Heart left ventricle (tissue), 16 donors: ENCODE measurements at regions of chr19 and their contacts with region 1.

Region 1: GRCh38 chr19:3094601-3095437 is 657 bp downstream of the GNA11 start:
- DNase-seq: peak in 1 of 5 donors; percentile 52
- ATAC-seq: no peak
- H3K4me3 ChIP-seq: peak overlapping the region; percentile 75 to 100 (median 98)
- H3K27ac ChIP-seq: peak overlapping the region; percentile 10 to 98 (median 94)
- H3K4me1 ChIP-seq: peaks cover 23 to 52% (median 45%) of the 10 kb centered on the region in 12 donors
- H3K27me3 ChIP-seq: peaks cover 0 to 16% (median 0%) of the 10 kb centered on the region in 9 donors
- CTCF ChIP-seq: no peak
- POLR2A ChIP-seq: no peak

Region 2: DNA sequence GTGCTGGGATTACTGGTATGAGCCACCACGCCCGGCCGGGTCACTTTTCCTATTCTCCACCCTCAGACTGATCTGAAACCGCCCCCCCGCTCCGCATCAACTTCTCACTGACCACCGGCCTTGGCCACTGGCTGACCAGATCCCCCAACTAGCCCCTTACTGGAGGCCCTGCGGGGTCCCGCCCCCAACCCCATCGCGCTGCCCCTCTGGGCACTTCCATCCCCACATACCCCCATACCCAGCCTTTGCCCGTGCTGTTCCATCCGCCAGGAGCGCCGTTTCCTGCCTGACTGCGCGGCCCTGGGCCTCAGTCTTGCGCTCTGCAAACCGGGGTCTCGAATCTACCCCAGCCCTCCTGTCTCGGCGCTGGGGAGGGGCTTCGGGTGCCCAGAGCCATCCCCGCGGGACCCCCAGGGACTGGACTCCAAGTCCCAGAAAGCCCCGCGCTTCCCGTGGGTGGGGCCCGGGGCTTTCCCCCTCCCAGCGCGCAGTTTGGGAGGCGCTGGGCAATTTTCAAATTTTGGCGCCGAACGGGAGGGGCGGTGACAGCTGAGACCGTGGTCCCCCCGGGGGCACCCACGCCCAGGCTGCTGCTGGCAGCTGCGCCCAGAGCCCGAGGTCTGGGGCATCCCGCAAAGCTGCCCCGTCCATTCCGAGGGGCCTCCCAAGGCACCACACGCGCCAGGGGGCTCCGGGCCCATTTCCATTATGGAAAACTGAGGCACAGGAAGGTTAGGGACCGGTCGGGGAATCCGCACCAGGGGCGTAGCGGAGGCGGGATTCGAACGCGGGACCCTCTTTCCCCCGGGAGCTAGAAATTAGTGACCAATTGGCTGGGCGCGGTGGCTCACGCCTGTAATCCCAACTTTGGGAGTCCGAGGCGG is 632.8 kb before region 1 on chr19:
- intact Hi-C with region 1: loop called in 1 of 10 experiments (anchors 10 kb)
- DNase-seq: peak in 4 of 5 donors; percentile 59 to 84 (median 70)
- ATAC-seq: peak in 3 of 4 donors; percentile 47 to 76 (median 74)
- H3K4me3 ChIP-seq: peak overlapping the region; percentile 4 to 76 (median 58)
- H3K27ac ChIP-seq: peak overlapping the region in 2 of 12 donors; percentile 56 to 74
- H3K4me1 ChIP-seq: peaks cover 0 to 27% (median 15%) of the 10 kb centered on the region in 12 donors
- H3K27me3 ChIP-seq: no peaks in the 10 kb centered on the region
- CTCF ChIP-seq: peak in 1 of 12 donors; percentile 17
- POLR2A ChIP-seq: no peak

Region 3: GRCh38 chr19:3047425-3048189 is 47.2 kb before region 1 on chr19:
- intact Hi-C with region 1: no loop called
- DNase-seq: peak; percentile 59 to 91 (median 79)
- ATAC-seq: peak; percentile 61 to 72 (median 70)
- H3K4me3 ChIP-seq: peak overlapping the region in 11 of 12 donors; percentile 24 to 65 (median 52)
- H3K27ac ChIP-seq: peak overlapping the region in 10 of 12 donors; percentile 6 to 90 (median 60)
- H3K4me1 ChIP-seq: peaks cover 0 to 16% (median 7%) of the 10 kb centered on the region in 12 donors
- H3K27me3 ChIP-seq: peaks cover 0 to 2% (median 0%) of the 10 kb centered on the region in 9 donors
- CTCF ChIP-seq: no peak
- POLR2A ChIP-seq: peak in 1 of 2 donors; percentile 34

Region 4: GRCh38 chr19:3292958-3293529 is 198.2 kb after region 1 on chr19:
- intact Hi-C with region 1: no loop called
- DNase-seq: no peak
- ATAC-seq: no peak
- H3K4me3 ChIP-seq: no peak overlapping the region
- H3K27ac ChIP-seq: no peak overlapping the region
- H3K4me1 ChIP-seq: no peaks in the 10 kb centered on the region
- H3K27me3 ChIP-seq: peaks cover 2 to 58% (median 22%) of the 10 kb centered on the region in 9 donors
- CTCF ChIP-seq: no peak
- POLR2A ChIP-seq: no peak